Aorta (tissue), 5 donors: ENCODE measurements at regions of chr16 and their contacts with region 1.

Region 1: GRCh38 chr16:57485916-57486857 is at the start of gene DOK4:
- DNase-seq: peak; percentile 89 to 95
- ATAC-seq: peak; percentile 94
- H3K4me3 ChIP-seq: peak within 1 kb of the TSS; percentile 52 to 95
- H3K27ac ChIP-seq: peak within 1 kb of the TSS; percentile 2 to 93
- H3K4me1 ChIP-seq: no peaks in the 10 kb centered on the region
- H3K27me3 ChIP-seq: no peaks in the 10 kb centered on the region
- total RNA-seq, gene DOK4: 35.5 to 44.5 TPM

Region 2: GRCh38 chr16:57447186-57447962 is 38.8 kb before region 1 on chr16 and contains the starts of genes CIAPIN1 and COQ9:
- intact Hi-C with region 1: loop called in 1 of 2 experiments (anchors 2 kb)
- DNase-seq: peak; percentile 97 to 99
- ATAC-seq: peak; percentile 98
- H3K4me3 ChIP-seq: peak within 1 kb of the TSS; percentile 68 to 88
- H3K27ac ChIP-seq: peak within 1 kb of the TSS; percentile 2 to 60
- H3K4me1 ChIP-seq: no peaks in the 10 kb centered on the region
- H3K27me3 ChIP-seq: no peaks in the 10 kb centered on the region
- total RNA-seq, gene CIAPIN1: 26.7 to 27.4 TPM
- total RNA-seq, gene COQ9: 22.0 to 29.4 TPM

Region 3: GRCh38 chr16:57462209-57462977 is 23.8 kb before region 1 on chr16 and contains the start of gene POLR2C:
- intact Hi-C with region 1: loop called in 1 of 2 experiments (anchors 2 kb)
- DNase-seq: peak; percentile 93 to 97
- ATAC-seq: peak; percentile 95
- H3K4me3 ChIP-seq: peak within 1 kb of the TSS; percentile 70 to 83
- H3K27ac ChIP-seq: no peak within 1 kb of the TSS
- H3K4me1 ChIP-seq: peaks cover 0 to 3% of the 10 kb centered on the region in 2 donors
- H3K27me3 ChIP-seq: no peaks in the 10 kb centered on the region
- total RNA-seq, gene POLR2C: 43.8 to 49.7 TPM

Region 4: DNA sequence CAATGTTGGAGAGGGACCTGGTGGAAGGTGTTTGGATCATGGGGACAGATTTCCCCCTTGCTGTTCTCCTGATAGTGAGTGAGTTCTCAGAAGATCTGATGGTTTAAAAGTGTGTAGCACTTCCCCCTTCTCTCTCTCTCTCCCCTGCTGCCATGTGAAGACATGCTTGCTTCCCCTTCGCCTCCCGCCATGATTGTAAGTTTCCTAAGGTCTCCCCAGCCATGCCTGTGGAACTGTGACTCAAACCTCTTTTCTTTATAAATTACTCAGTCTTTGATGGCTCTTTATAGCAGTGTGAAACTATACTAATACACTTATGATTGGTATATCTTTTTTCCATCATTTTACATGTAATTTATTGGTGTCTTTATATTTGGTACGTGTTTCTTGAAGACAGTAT is 69.6 kb after region 1 on chr16:
- intact Hi-C with region 1: no loop called
- DNase-seq: no peak
- ATAC-seq: no peak
- H3K4me3 ChIP-seq: no peak overlapping the region
- H3K27ac ChIP-seq: no peak overlapping the region
- H3K4me1 ChIP-seq: no peaks in the 10 kb centered on the region
- H3K27me3 ChIP-seq: no peaks in the 10 kb centered on the region